ENCODE measurements at regions of chr7 and their contacts with region 1.

Region 1: GRCh38 chr7:134632937-134633540 is 13.6 kb upstream of the BPGM start:
- DNase-seq: peak; percentile 70 to 83 (median 76)
- H3K4me3 ChIP-seq: no peak overlapping the region
- H3K27ac ChIP-seq: no peak overlapping the region
- H3K4me1 ChIP-seq: peaks cover 0 to 7% (median 0%) of the 10 kb centered on the region in 4 experiments
- H3K27me3 ChIP-seq: peaks cover 0 to 2% (median 0%) of the 10 kb centered on the region in 5 experiments

Region 2: GRCh38 chr7:133904776-133905175 is 728.3 kb before region 1 on chr7:
- CTCF ChIA-PET with region 1: no interaction called
- POLR2A ChIA-PET with region 1: no interaction called
- DNase-seq: no peak
- H3K4me3 ChIP-seq: no peak overlapping the region
- H3K27ac ChIP-seq: no peak overlapping the region
- H3K4me1 ChIP-seq: no peaks in the 10 kb centered on the region
- H3K27me3 ChIP-seq: no peaks in the 10 kb centered on the region

Region 3: DNA sequence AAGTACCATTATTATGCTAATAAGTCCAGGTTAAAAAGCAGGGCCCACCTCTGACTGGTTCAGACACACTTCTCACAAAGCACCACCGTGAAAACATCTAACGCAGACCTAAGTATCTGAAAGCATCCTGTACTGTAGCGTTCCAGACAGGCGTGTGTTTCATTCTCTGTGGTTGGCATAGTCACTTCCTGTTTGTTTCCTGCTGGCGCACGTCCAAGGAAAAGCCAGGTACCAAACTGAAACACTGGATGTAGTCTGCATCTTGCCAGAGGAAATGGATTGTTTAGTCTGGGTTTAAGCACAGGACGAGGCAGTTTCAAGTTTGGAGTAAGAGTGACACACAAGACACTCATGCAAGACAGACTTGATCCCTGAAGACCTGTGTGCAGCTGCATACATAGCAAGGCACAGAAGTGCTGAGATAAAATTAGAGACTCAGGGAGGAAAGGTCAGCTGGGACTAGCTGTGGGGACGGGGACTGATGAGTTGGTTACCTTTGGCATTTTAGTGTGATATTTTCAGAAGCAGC is 36.9 kb after region 1 on chr7:
- CTCF ChIA-PET with region 1: interaction called, 12 read pairs
- POLR2A ChIA-PET with region 1: no interaction called
- DNase-seq: peak; percentile 89 to 96 (median 95)
- H3K4me3 ChIP-seq: peak overlapping the region in 5 of 7 experiments; percentile 5 to 62 (median 16)
- H3K27ac ChIP-seq: peak overlapping the region in 1 of 2 experiments; percentile 67
- H3K4me1 ChIP-seq: peaks cover 12 to 28% (median 20%) of the 10 kb centered on the region in 4 experiments
- H3K27me3 ChIP-seq: no peaks in the 10 kb centered on the region

Region 4: GRCh38 chr7:134701272-134701671 is 68.2 kb after region 1 on chr7:
- CTCF ChIA-PET with region 1: interaction called, 151 read pairs
- POLR2A ChIA-PET with region 1: no interaction called
- DNase-seq: peak; percentile 50 to 74 (median 68)
- H3K4me3 ChIP-seq: no peak overlapping the region
- H3K27ac ChIP-seq: no peak overlapping the region
- H3K4me1 ChIP-seq: no peaks in the 10 kb centered on the region
- H3K27me3 ChIP-seq: peaks cover 0 to 7% (median 3%) of the 10 kb centered on the region in 5 experiments

Region 5: DNA sequence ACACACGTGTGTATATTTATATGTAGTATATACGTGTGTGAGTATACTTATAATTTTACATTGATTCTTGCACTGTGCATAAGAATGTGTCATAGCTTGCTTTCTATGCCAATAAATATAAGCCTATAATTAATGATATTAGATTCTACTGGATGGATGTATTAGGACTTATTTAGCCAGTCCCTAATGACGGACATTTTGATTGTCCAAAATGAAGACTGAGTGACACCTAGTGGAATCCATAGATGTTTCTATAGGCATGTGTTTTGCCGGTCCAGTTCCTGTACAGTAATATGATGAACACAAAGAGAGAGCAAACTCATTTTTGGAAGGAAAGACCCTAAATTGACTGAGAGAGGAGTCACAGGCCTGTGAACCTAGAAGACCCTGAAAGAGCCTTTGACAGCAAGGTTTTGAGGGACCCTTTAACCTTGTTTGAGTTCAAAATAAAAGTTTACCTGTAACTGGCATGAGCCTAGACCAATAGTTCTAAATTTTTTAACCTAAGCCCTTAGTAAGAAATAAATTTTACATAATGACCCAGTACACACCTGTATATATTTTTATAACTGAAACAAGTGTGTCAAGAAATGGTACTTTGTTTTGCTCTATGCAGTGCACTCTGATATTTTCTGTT is 310.8 kb after region 1 on chr7:
- CTCF ChIA-PET with region 1: interaction called, 11 read pairs
- POLR2A ChIA-PET with region 1: no interaction called
- DNase-seq: peak; percentile 19 to 46 (median 33)
- H3K4me3 ChIP-seq: no peak overlapping the region
- H3K27ac ChIP-seq: no peak overlapping the region
- H3K4me1 ChIP-seq: no peaks in the 10 kb centered on the region
- H3K27me3 ChIP-seq: no peaks in the 10 kb centered on the region